PC-9 (cell line): ENCODE measurements at regions of chr1 and their contacts with region 1.

Region 1: DNA sequence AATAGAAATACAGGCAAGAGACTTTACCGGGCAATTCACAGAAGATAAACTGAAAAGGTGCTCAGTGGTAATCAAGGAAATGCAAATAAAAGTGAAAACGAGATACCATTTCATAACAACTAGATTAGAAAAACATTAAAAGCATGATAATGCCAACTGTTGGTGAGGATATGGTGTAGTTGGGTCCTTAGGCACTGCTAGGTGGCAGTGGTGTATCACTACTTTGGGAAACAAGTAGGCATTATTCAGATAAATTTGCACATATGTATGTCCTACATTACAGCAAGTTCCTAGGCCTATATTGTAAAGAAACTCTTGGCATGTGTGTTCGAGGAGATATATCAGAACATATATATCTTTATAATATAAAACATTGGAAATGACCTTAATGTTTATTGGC is 31.0 kb downstream of the AZIN2 start:
- DNase-seq: no peak
- H3K4me3 ChIP-seq: no peak overlapping the region
- H3K27ac ChIP-seq: no peak overlapping the region
- H3K4me1 ChIP-seq: no peaks in the 10 kb centered on the region
- H3K27me3 ChIP-seq: no peaks in the 10 kb centered on the region
- CTCF ChIP-seq: peak; percentile 69

Region 2: DNA sequence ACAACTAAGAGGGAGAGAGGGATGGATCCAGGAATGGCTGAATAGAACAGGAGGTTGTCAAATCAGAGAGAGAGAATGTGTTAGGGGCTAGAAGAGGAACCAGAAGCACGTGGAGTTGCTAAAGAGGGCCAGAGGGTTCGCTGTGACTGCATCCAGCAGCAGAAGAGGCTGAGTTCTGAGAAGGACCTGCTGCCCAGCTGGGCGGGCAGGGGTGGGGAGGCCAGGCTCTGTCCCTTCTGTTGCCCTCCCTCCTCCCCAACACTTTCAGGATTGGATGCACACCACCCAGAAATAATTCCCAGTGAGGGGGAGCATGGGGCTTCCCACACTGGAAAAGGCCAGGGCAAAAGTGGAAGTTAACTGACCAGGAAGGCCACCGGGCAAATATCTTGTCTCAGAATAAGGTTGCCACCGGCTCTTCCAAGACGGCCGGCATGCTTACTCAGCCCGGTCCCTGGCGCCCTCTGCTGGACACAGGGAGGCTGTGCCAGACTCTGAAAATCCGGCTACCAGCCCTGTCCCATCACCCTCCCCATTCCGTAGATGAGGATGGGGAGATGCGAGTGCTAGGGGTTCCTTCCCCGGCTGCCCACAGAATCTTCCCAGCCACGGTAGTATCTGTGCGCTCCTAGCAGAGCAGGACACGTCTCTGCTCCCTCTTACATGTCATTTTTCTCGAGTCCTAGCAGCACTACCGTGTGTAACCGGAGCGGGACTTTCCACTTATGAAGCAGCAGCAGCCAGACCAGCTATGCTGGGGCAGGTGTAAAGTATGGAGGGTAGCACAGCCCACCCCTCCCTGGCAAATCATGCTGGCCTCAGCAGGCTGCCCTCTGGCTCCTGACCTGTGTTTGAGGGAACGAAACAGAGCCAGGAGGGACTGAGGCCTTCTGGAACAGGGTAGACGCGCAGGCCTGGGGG is 255.8 kb after region 1 on chr1:
- CTCF ChIA-PET with region 1: no interaction called
- POLR2A ChIA-PET with region 1: no interaction called
- intact Hi-C with region 1: loop called (anchors 1 kb)
- DNase-seq: peak; percentile 48 to 80
- H3K4me3 ChIP-seq: no peak overlapping the region
- H3K27ac ChIP-seq: no peak overlapping the region
- H3K4me1 ChIP-seq: no peaks in the 10 kb centered on the region; the same call in 1 of the 2 replicates
- H3K27me3 ChIP-seq: no peaks in the 10 kb centered on the region
- CTCF ChIP-seq: peak; percentile 94

Region 3: DNA sequence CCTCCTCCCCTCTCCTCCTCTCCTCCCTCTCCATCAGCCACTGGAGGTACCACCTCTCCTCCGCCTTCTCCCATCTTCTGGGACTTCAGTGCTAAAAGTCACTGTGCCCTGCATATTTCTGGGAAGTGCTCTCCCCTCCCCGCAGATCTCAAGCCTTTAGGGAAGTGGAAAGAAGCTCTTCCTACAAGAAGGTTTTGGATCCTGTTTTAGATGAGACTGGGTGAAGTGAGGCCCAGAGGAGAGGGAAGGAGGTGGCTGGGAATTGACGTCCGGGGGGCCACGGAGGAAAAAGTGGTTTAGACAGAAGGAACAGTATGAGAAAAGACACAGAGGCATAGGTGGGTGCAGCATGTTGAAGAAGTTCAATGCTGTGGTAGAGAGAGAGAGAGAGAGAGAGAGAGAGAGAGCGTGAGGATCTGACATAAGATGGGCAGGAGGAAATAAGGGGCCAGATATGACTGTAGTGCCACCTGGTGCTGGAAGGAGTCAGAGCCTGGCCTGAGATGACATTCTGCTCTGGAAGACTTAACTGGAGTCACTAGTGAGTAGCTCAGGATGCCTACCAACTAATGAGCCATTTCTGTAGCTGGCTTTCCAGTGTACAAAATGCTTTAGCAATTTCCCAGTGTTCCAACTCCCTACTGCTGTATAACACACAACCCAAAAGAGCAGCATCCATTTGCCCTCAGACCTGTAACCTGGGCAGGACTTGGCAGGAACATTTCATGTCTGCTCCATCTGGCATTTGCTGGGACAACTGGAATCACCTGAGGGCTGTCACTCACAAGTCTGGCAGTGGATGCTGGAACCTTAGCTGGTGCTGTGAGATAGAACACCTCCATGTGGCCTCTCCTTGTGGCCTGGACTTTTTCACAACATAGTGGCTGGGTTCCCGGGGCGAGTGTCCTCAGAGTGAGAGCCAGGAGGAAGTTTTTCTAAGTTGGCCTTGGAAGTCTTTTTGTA is 343.9 kb after region 1 on chr1:
- CTCF ChIA-PET with region 1: no interaction called
- POLR2A ChIA-PET with region 1: no interaction called
- intact Hi-C with region 1: loop called (anchors 5 kb)
- DNase-seq: peak; percentile 50 to 51
- H3K4me3 ChIP-seq: no peak overlapping the region
- H3K27ac ChIP-seq: no peak overlapping the region
- H3K4me1 ChIP-seq: peaks cover 32% of the 10 kb centered on the region
- H3K27me3 ChIP-seq: no peaks in the 10 kb centered on the region
- CTCF ChIP-seq: peak; percentile 76

Region 4: DNA sequence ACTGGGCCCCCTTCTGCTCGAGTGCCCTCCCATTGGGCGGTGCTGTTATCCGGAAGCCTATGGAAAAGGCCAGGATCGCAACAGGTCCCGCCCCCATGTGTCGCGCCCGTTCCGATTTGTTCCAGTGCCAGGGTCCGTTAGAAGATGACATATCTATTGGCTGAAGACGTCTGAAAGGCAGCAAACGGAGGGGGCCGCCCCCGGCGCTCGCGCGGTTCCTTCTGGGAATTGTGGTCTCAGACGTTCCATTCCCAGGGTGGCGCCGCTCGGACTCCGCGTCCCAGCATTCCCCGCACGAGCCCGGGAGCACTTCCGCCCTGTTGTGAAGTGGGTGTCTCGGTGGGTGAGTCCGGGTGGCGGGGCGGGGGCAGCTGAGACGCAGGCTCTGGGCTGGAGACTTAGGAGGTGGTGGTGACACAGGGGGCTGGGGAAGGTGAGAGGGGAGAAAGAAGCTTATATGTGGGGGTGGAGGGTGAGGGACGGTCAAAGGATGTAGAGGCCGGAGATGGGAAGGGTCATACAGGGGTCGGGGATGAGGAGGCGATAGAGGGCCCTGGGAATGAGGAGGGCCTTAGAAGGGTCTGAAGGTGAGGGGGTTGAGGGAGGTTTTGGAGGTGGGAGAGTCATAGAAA is 360.5 kb after region 1 on chr1 and contains the start of gene ZSCAN20:
- CTCF ChIA-PET with region 1: no interaction called
- POLR2A ChIA-PET with region 1: no interaction called
- intact Hi-C with region 1: loop called (anchors 1 kb)
- DNase-seq: peak; percentile 92 to 96
- H3K4me3 ChIP-seq: peak within 1 kb of the TSS; percentile 66
- H3K27ac ChIP-seq: no peak within 1 kb of the TSS
- H3K4me1 ChIP-seq: peaks cover 10% of the 10 kb centered on the region
- H3K27me3 ChIP-seq: no peaks in the 10 kb centered on the region
- CTCF ChIP-seq: no peak
- total RNA-seq, gene ZSCAN20: 6.0 and 6.4 TPM in 2 replicates

Region 5: DNA sequence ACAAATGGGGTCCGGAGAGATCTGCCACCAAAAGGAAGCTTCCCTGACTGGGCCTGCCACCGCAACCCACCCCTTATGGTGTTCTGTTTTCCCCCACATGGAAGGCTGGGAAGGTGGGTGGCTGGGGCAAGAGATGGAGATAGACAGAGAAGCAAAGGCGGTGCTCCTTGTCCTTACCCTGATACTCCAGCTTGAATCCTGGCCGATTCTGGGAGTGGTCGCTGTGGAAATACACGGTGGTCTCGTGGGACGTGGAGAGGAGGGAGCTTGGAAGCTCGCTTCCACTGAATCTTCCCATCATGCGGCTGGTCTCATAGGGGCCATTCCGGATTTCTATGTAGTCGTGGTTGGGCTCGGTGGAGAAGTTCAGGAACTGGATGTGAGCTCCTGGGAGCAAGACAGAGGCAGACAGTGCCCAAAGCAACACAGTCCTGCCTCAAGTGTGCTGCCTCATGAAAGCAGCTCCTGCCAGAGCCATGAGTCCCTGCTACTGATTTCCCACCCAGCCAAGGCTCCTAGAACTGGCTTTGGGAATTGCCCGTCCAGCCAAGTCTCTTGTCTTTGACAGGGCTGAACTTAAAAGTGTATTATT is 499.0 kb after region 1 on chr1:
- CTCF ChIA-PET with region 1: no interaction called
- POLR2A ChIA-PET with region 1: no interaction called
- intact Hi-C with region 1: loop called (anchors 5 kb)
- DNase-seq: no peak
- H3K4me3 ChIP-seq: no peak overlapping the region
- H3K27ac ChIP-seq: no peak overlapping the region
- H3K4me1 ChIP-seq: no peaks in the 10 kb centered on the region
- H3K27me3 ChIP-seq: peaks cover 82% of the 10 kb centered on the region
- CTCF ChIP-seq: no peak